Activated naive CD4-positive, alpha-beta T cell treated with anti-CD3 and anti-CD28 coated beads for 36 hours (primary cell): ENCODE measurements at regions of chr22 and their contacts with region 1.

Region 1: GRCh38 chr22:42180349-42180842 is 49.8 kb upstream of the CYP2D6 start:
- DNase-seq: peak; percentile 74
- H3K4me3 Mint-ChIP-seq: peak overlapping the region; percentile 14
- H3K27ac Mint-ChIP-seq: peak overlapping the region; percentile 73
- H3K4me1 Mint-ChIP-seq: peaks cover 92% of the 10 kb centered on the region
- H3K27me3 Mint-ChIP-seq: no peaks in the 10 kb centered on the region

Region 2: DNA sequence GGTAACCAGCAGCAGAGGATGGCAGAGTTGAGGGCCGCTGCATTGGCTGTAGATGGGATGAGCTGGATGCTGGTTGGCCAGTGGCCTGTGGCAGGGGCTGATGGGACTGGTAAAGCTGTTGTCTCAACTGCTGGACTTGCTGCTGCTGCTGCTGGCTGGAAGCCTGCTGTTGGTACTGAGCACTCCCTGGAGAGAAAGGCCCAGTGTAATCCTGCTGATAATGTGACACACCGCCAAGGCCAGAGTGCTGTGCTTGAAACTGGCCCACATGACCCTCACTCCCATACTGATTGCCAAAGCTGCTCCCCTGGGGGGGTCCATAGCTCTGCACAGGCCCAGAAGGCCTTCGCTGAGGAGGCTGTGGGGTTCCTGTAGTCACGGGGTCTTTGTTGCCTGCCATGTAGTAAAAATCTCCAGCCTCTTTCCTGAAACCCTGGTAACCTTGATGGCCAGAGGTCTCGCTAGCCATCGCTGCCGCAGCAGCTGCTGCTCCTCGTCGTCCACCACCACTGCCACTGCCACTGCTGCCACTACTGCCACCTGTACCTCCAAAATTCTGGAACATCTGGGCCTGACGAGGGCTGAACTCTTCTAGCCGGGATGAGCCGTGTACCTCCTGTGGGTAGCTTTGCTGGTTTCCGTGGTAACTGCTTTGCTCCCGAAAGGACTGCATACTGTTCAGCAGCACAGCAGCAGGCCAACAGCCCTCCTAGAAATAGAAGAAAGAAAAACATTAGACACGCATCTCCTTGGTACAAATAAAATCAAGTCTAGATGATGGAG is 34.4 kb after region 1 on chr22:
- CTCF ChIA-PET with region 1: no interaction called
- intact Hi-C with region 1: loop called (anchors 5 kb)
- DNase-seq: no peak
- H3K4me3 Mint-ChIP-seq: no peak overlapping the region
- H3K27ac Mint-ChIP-seq: no peak overlapping the region
- H3K4me1 Mint-ChIP-seq: peaks cover 42% of the 10 kb centered on the region
- H3K27me3 Mint-ChIP-seq: no peaks in the 10 kb centered on the region

Region 3: DNA sequence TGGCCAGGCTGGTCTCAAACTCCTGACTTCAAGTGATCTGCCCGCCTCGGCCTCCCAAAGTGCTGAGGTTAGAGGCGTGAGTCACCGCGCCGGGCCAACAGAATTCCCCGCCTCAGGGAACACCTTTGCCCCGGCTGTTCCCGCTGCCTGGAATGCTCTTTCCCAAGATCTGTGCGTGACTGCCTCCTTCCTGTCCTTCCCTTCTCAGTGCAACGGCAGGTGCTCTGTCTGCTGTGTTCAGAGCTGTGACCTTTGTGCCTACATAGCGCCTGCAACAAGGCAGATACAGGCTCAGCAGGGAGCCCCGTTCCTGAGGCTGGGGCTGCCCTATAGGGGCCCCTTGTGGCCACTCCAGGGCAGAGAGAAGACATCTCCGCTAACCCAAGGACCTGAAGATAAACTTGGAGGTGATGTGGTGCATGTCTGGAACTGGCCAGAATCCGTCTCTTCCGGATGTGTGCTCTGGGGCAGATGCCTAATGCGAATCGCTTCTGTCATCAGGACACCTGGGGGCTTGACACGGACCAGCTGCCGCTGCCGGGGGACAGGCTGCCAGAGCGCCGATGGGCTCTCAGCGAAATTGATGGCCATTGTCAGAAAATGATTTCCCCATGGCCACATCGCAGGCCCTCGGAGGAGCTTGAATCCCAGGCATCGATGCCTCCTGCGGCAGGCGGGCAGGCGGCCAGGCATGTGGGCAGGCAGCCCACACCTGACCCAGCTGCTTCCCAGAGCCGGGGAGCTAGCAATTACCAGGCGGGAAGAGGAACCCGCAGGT is 133.6 kb after region 1 on chr22:
- CTCF ChIA-PET with region 1: interaction called, 3 read pairs
- intact Hi-C with region 1: loop called (anchors 5 kb)
- DNase-seq: peak; percentile 73
- H3K4me3 Mint-ChIP-seq: no peak overlapping the region
- H3K27ac Mint-ChIP-seq: no peak overlapping the region
- H3K4me1 Mint-ChIP-seq: peaks cover 46% of the 10 kb centered on the region
- H3K27me3 Mint-ChIP-seq: no peaks in the 10 kb centered on the region

Region 4: GRCh38 chr22:42369245-42370041 is 189.0 kb after region 1 on chr22:
- CTCF ChIA-PET with region 1: no interaction called
- intact Hi-C with region 1: loop called (anchors 2 kb)
- DNase-seq: peak; percentile 88
- H3K4me3 Mint-ChIP-seq: peak overlapping the region; percentile 85
- H3K27ac Mint-ChIP-seq: no peak overlapping the region
- H3K4me1 Mint-ChIP-seq: peaks cover 12% of the 10 kb centered on the region
- H3K27me3 Mint-ChIP-seq: peaks cover 23% of the 10 kb centered on the region